ENCODE measurements at regions of chr21 and their contacts with region 1.

Region 1: GRCh38 chr21:16082038-16082816 is 352.4 kb downstream of the USP25 start:
- DNase-seq: peak in 1 of 2 experiments; percentile 21
- H3K4me3 ChIP-seq: no peak overlapping the region
- H3K4me1 ChIP-seq: no peaks in the 10 kb centered on the region
- H3K27me3 ChIP-seq: no peaks in the 10 kb centered on the region

Region 2: GRCh38 chr21:14989359-14989758 is 1092.9 kb before region 1 on chr21:
- in situ Hi-C with region 1: no loop called
- DNase-seq: no peak
- H3K4me3 ChIP-seq: no peak overlapping the region
- H3K4me1 ChIP-seq: no peaks in the 10 kb centered on the region
- H3K27me3 ChIP-seq: no peaks in the 10 kb centered on the region

Region 3: GRCh38 chr21:16034446-16035190 is 47.6 kb before region 1 on chr21:
- in situ Hi-C with region 1: no loop called
- DNase-seq: no peak
- H3K4me3 ChIP-seq: no peak overlapping the region
- H3K4me1 ChIP-seq: no peaks in the 10 kb centered on the region
- H3K27me3 ChIP-seq: no peaks in the 10 kb centered on the region

Region 4: DNA sequence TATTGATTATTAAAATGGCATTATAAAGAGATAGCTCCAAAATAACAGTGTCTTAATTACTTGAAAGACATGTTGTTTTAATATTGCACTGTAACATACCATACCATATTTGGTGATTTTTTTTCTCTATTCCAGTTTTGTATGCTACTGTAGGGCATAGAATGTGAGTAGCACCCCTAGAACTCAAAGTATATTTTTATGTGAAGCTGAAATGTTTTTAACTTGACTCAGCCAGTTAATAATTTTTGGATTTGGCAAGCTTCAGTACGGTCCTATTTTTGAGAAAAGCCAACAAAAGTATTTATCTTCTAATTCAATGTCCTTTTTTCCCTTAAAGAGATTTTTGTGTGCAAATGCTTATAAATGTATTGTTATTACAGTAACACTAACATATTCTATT is 241.4 kb after region 1 on chr21:
- in situ Hi-C with region 1: loop called (anchors 10 kb)
- DNase-seq: no peak
- H3K4me3 ChIP-seq: no peak overlapping the region
- H3K4me1 ChIP-seq: no peaks in the 10 kb centered on the region
- H3K27me3 ChIP-seq: no peaks in the 10 kb centered on the region

Measured in HAP-1 (cell line).